WTC11 (cell line): ENCODE measurements at regions of chr5 and their contacts with region 1.

Region 1: GRCh38 chr5:132386644-132387286 is 17.3 kb downstream of the SLC22A5 start:
- DNase-seq: peak; percentile 74
- ATAC-seq: peak; percentile 95
- H3K4me3 Mint-ChIP-seq: no peak overlapping the region
- H3K27ac Mint-ChIP-seq: no peak overlapping the region
- H3K4me1 Mint-ChIP-seq: peaks cover 8% of the 10 kb centered on the region
- H3K27me3 Mint-ChIP-seq: no peaks in the 10 kb centered on the region
- CTCF ChIP-seq: peak; percentile 46; the same call in 1 of the 2 replicates

Region 2: GRCh38 chr5:132363431-132364112 is 23.2 kb before region 1 on chr5:
- CTCF ChIA-PET with region 1: no interaction called
- POLR2A ChIA-PET with region 1: no interaction called
- DNase-seq: no peak
- ATAC-seq: no peak
- H3K4me3 Mint-ChIP-seq: no peak overlapping the region
- H3K27ac Mint-ChIP-seq: no peak overlapping the region
- H3K4me1 Mint-ChIP-seq: no peaks in the 10 kb centered on the region
- H3K27me3 Mint-ChIP-seq: no peaks in the 10 kb centered on the region; the same call in 1 of the 2 replicates
- CTCF ChIP-seq: no peak

Region 3: GRCh38 chr5:132410451-132411381 is 24.0 kb after region 1 on chr5:
- CTCF ChIA-PET with region 1: interaction called, 29 read pairs
- POLR2A ChIA-PET with region 1: no interaction called
- DNase-seq: peak; percentile 88
- ATAC-seq: peak; percentile 98
- H3K4me3 Mint-ChIP-seq: peak overlapping the region; percentile 70
- H3K27ac Mint-ChIP-seq: peak overlapping the region; percentile 44
- H3K4me1 Mint-ChIP-seq: peaks cover 8% of the 10 kb centered on the region
- H3K27me3 Mint-ChIP-seq: peaks cover 5% of the 10 kb centered on the region
- CTCF ChIP-seq: peak; percentile 56

Region 4: GRCh38 chr5:132506094-132506692 is 119.4 kb after region 1 on chr5:
- CTCF ChIA-PET with region 1: interaction called, 62 read pairs
- POLR2A ChIA-PET with region 1: no interaction called
- DNase-seq: no peak
- ATAC-seq: peak; percentile 72
- H3K4me3 Mint-ChIP-seq: no peak overlapping the region
- H3K27ac Mint-ChIP-seq: 0 out of 2 replicates have a peak overlapping the region, but pooled peaks have one; percentile 24
- H3K4me1 Mint-ChIP-seq: peaks cover 8% of the 10 kb centered on the region; the same call in 1 of the 2 replicates
- H3K27me3 Mint-ChIP-seq: no peaks in the 10 kb centered on the region; the same call in 1 of the 2 replicates
- CTCF ChIP-seq: no peak